ENCODE measurements at regions of chr4 and their contacts with region 1.

Region 1: GRCh38 chr4:29309050-29309449 is 1411.1 kb upstream of the PCDH7 start:
- DNase-seq: no peak

Region 2: DNA sequence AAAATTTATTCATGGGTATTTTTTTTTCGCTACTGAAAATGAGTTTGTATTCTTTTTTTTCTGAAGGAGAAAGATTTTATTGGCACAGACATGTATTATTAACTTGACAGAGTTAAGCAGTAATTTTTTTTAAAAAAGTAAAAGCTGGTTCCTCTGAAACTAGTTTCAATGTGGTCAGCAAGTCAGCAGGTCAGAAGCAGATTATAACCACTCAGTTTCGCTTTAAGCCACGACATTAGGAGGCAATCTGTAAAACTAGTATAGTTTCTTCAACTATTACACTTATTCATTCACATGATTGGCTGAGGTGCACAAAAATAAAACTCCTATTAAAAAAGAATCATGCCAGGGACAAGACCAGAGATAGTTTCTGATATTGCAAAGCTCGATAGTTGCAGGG is 696.9 kb after region 1 on chr4:
- intact Hi-C with region 1: loop called in 1 of 2 experiments (anchors 10 kb)
- DNase-seq: no peak